ENCODE measurements at regions of chr3 and their contacts with region 1.

Region 1: DNA sequence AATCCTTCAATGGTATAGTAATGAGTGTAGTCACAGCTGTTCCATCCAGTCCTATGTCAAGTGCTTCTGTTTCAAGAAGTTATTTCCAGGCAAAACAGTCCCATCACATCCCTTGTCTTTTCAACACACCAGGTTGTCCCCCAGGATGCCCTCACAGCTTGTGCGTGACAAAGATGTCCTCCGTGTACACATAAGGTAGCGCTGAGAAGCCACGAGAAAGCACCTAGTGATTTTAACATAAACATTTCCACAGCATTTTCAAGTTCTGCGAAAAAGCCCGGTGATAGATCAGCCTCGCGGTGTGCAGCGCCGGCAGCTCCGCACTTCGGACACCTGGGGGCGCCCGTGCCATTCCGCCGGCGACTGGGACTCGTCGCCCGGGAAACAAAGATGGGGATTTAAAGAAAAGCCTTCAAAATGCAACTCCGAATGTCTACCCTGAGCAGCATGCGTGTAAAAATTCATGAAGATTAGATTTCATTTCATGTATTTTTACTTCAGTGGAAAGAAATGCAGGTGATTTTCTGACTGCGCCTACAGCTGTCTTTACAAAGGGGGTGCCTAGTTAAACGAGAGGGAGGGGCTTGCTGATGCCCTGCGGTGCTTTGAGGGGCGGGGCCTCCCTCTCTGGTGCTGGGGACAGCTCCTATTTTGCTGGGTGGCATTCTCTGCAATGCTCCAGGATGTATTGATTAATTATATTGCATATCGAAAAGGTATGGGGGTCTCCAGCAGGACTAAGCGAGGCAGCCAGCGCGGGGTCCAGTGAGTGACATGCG is 49.9 kb downstream of the KY start:
- DNase-seq: peak; percentile 91
- ATAC-seq: peak; percentile 60

Region 2: DNA sequence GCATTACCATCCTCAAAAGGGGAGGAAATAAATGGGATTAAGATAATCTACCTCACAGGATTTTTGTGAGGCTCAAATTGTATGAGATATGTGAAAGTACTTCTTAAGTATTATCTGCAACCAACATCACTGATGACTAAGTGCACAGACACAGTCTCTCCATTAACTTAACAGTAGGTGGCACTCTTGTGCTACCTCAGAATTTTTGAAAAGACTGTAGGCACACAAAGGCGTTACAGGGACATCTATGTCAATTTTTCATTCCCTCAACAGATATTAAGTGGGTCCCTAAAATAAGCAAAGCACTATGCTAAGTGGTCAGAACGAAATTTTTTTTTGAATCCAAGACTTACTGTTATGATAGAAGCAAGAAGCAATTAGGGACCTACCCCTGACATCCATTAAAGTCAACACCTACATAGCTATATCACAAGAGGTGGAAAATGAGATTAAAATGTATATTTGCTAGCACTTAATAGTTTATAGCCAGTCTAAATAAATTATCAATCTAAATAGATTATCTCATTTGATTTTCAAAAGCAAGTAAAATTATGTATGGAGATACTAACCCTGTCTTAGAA is 403.1 kb before region 1 on chr3:
- intact Hi-C with region 1: no loop called
- DNase-seq: no peak
- ATAC-seq: peak; percentile 72

Region 3: GRCh38 chr3:134748698-134749097 is 147.8 kb after region 1 on chr3:
- intact Hi-C with region 1: no loop called
- DNase-seq: no peak
- ATAC-seq: no peak

Region 4: GRCh38 chr3:134864636-134865035 is 263.8 kb after region 1 on chr3:
- intact Hi-C with region 1: no loop called
- DNase-seq: no peak
- ATAC-seq: peak; percentile 42

Region 5: DNA sequence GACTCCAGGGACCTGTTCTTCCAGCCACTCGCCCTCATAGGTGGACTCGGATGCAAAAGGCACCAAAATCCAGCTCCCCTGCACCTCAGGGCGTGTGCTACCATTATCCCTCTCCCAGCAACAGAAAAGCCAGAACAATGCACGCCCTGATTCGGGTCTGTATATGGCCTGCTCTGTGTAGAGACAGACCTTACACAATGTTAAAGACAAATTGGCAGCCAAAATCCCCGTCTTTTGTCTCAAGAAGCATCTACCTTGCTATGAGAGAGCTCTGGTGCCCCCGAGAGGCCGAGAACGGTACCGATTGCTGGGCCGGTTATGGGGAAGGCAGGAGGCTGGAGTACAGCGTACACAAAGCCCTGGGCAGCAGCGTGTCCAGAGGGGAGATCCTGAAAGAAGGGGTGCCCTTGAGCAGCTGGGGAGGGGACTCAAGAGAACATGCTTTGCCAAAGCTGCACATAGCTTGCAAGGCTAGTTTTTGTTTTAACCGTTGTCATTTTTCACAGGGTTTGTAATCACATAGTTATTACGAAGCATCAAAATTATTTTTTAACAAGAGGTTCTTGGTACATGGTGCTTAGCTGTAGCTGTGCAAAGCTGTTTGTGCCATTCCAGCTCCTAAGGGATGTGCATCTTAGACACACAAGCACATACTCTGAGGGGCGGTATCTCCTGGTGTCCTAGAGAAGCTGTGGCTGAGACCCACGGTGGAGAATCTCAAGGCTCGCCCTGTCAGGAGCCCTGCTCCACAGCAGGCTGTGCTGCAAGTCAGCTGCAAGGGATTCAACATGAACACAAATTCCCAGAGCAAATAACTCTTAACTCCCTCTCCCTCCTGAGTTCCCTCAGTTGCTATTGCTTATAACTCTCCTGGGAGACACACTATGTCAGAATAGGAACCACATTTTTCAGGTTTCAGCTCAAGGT is 903.1 kb after region 1 on chr3:
- intact Hi-C with region 1: loop called (anchors 5 kb)
- DNase-seq: peak; percentile 67
- ATAC-seq: peak; percentile 72

Region 6: DNA sequence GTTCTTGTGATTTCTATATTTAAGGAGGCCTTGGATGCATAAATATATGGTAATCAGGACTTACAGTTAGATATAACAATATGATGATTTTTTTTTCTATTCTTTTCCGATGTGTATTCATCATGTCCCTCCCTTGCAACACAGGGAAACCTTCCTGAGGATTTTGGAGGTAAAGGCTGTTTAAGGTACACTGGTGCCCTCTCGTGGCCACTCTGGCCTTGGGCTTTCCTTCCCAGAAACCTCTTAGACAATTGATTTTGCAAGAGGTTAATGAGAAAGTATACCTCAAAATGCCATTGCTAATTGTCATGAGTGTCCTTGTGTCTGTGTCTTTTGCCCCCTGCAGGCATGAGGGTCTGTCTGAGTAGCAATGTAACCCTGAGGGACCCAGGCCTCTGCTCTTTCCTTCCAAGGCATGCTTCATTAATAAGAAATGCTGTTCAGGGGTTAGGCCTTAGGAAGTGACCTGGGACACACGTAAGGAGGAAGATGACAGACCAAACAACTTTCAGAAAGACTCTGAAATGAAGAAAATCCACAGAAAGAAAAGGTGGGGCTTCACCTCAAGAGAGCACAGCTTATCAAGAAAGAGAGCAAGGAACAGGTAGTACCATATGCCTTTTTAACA is 1294.3 kb after region 1 on chr3:
- intact Hi-C with region 1: loop called (anchors 2 kb)
- DNase-seq: no peak
- ATAC-seq: peak; percentile 56

Measured in Right ventricle myocardium inferior (tissue), 1 donor.